ENCODE measurements at regions of chr22 and their contacts with region 1.

Region 1: GRCh38 chr22:50620593-50621355 is 7.2 kb downstream of the ARSA start:
- DNase-seq: peak; percentile 39 to 95 (median 64)
- ATAC-seq: peak; percentile 66
- H3K4me3 ChIP-seq: peak overlapping the region; percentile 53
- H3K4me3 Mint-ChIP-seq: peak overlapping the region; percentile 90
- H3K27ac ChIP-seq: peak overlapping the region; percentile 85 to 92
- H3K27ac Mint-ChIP-seq: peak overlapping the region; percentile 98
- H3K4me1 ChIP-seq: peaks cover 36% of the 10 kb centered on the region
- H3K4me1 Mint-ChIP-seq: peaks cover 35% of the 10 kb centered on the region
- H3K27me3 ChIP-seq: no peaks in the 10 kb centered on the region
- H3K27me3 Mint-ChIP-seq: no peaks in the 10 kb centered on the region
- CTCF ChIP-seq: peak; percentile 79

Region 2: DNA sequence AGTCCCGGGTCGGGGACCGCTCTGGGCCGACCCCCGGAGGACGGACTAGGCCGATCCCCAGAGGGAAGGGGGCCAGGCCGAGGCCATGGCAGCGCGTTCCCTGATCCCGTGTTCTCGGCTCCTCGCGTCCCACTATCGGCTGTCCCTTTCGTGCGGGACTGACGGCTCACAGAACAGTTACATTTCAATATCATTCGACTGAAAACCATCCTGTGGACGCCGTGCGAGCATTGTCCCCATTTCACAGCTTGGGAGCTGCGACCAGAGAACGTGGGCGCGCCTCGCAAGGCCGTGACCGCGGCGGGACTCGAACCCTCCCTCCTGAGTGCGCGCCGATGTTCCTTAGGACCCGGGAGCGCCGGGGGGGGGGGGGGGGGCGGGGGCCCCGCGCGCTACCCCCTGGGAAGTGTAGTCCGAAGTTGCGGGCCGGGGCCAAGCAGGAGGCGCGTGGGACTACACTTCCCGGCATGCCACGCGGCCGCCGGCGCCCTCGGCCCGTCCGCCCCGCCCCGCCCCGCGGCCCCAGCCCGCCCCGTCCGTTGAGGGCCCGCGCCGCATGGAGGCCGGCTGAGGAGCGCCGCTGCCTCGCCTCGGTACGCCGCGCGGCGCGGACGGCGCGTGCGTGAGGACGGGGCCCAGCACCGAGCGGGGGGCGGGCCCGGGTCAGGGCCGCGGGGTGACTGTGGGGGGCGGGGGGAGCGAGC is 435.2 kb before region 1 on chr22 and contains the start of gene TRABD:
- CTCF ChIA-PET with region 1: no interaction called
- POLR2A ChIA-PET with region 1: interaction called, 32 read pairs
- intact Hi-C with region 1: loop called in 1 of 2 experiments (anchors 1 kb)
- DNase-seq: peak; percentile 77 to 96 (median 88)
- ATAC-seq: peak; percentile 67
- H3K4me3 ChIP-seq: peak within 1 kb of the TSS; percentile 62
- H3K4me3 Mint-ChIP-seq: peak within 1 kb of the TSS; percentile 95
- H3K27ac ChIP-seq: peak within 1 kb of the TSS; percentile 56 to 60
- H3K27ac Mint-ChIP-seq: peak within 1 kb of the TSS; percentile 96
- H3K4me1 ChIP-seq: peaks cover 53% of the 10 kb centered on the region
- H3K4me1 Mint-ChIP-seq: peaks cover 25% of the 10 kb centered on the region
- H3K27me3 ChIP-seq: peaks cover 0 to 2% of the 10 kb centered on the region in 2 experiments
- H3K27me3 Mint-ChIP-seq: peaks cover 4% of the 10 kb centered on the region
- CTCF ChIP-seq: no peak
- total RNA-seq, gene TRABD: 184 to 193 TPM

Region 3: GRCh38 chr22:50200461-50201190 is 420.1 kb before region 1 on chr22 and contains the start of gene SELENOO:
- CTCF ChIA-PET with region 1: no interaction called
- POLR2A ChIA-PET with region 1: no interaction called
- intact Hi-C with region 1: no loop called
- DNase-seq: peak; percentile 76 to 96 (median 90)
- ATAC-seq: peak; percentile 80
- H3K4me3 ChIP-seq: peak within 1 kb of the TSS; percentile 60
- H3K4me3 Mint-ChIP-seq: peak within 1 kb of the TSS; percentile 91
- H3K27ac ChIP-seq: peak within 1 kb of the TSS in 1 of 2 donors; percentile 40
- H3K27ac Mint-ChIP-seq: peak within 1 kb of the TSS; percentile 85
- H3K4me1 ChIP-seq: peaks cover 27% of the 10 kb centered on the region
- H3K4me1 Mint-ChIP-seq: peaks cover 27% of the 10 kb centered on the region
- H3K27me3 ChIP-seq: no peaks in the 10 kb centered on the region
- H3K27me3 Mint-ChIP-seq: no peaks in the 10 kb centered on the region
- CTCF ChIP-seq: no peak
- total RNA-seq, gene SELENOO: 26.0 to 26.1 TPM

Region 4: DNA sequence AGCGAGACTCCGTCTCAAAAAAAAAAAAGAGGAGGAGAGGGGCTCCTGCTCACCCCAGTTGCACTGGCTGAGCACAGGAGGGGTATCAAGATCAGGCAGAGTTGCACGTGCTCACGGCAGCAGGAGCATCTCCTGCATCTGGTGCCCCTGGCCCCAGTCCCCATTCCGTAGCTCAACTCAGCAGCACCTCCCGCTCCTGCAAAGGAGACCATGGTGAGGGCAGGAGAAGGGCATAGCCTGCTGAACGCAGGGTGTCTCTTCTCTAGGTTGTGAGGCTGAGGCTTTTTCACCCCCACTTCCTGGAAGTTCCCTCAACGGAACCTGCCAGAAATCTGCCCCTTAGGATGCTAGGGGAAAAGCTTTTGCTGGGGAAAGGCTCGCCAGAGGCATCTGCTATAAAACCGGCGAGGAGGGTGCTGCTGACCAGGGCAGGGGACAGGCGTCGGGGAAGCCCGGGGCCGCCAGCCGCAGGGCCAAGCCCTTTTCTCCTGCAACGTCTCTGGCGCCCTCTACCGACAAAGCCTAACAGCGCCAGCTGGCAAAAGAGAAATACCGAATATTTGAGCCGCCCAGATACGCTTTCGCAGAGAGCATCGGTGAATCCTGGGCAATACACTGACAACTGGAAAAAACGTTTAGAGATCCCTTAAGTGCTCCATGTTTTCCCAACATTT is 278.7 kb before region 1 on chr22:
- CTCF ChIA-PET with region 1: interaction called, 5 read pairs
- POLR2A ChIA-PET with region 1: interaction called, 6 read pairs
- intact Hi-C with region 1: loop called in 1 of 2 experiments (anchors 5 kb)
- DNase-seq: peak; percentile 80 to 94 (median 87)
- ATAC-seq: peak; percentile 53
- H3K4me3 ChIP-seq: peak overlapping the region; percentile 62
- H3K4me3 Mint-ChIP-seq: peak overlapping the region; percentile 88
- H3K27ac ChIP-seq: peak overlapping the region; percentile 84 to 85
- H3K27ac Mint-ChIP-seq: peak overlapping the region; percentile 98
- H3K4me1 ChIP-seq: peaks cover 27% of the 10 kb centered on the region
- H3K4me1 Mint-ChIP-seq: peaks cover 7% of the 10 kb centered on the region
- H3K27me3 ChIP-seq: no peaks in the 10 kb centered on the region
- H3K27me3 Mint-ChIP-seq: no peaks in the 10 kb centered on the region
- CTCF ChIP-seq: peak; percentile 95

Region 5: DNA sequence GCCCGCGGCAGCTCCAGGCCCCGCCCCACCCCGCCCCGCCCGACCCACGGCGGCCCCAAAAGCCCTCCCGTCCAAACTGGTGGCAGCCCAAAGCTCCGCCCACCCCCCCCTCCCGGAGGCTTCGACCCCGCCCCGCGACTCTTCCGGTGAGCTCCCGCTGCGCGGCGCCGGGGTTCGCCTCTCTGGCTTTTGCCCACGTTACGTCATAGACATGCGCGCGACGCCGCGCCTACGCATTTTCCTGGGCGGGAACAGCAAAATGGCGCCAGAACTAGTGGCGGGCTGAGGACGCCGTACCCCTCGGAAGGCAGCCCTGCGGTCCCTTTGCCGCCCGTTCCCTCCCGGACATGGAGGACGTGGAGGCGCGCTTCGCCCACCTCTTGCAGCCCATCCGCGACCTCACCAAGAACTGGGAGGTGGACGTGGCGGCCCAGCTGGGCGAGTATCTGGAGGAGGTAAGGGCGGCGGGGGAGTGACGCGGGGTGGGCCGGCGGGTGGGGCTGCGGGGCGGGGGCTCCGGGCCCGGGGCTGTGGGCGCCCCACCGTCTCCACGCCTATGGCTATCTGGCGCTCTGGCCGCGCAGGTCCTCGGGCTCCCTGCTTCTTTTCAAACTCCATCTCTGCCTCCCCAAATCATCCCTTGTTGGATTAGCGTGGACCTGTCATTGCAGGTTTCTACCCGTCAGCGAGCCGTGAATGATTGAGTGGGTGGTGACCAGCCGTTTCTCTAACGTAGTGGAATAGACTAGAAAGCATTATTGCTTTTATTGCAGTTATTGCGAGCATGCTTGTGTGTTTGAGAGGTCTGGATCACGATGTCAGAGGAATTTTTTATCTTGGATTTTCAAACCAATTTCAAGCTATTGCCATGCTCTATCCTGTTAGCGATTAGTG is 112.5 kb before region 1 on chr22 and contains the start of gene NCAPH2:
- CTCF ChIA-PET with region 1: interaction called, 11 read pairs
- POLR2A ChIA-PET with region 1: interaction called, 47 read pairs
- intact Hi-C with region 1: loop called in 1 of 2 experiments (anchors 5 kb)
- DNase-seq: peak in 10 of 14 experiments; percentile 94 to 99 (median 97)
- ATAC-seq: peak; percentile 75
- H3K4me3 ChIP-seq: peak within 1 kb of the TSS; percentile 92
- H3K4me3 Mint-ChIP-seq: peak within 1 kb of the TSS; percentile 94
- H3K27ac ChIP-seq: peak within 1 kb of the TSS; percentile 89 to 92
- H3K27ac Mint-ChIP-seq: peak within 1 kb of the TSS; percentile 95
- H3K4me1 ChIP-seq: peaks cover 38% of the 10 kb centered on the region
- H3K4me1 Mint-ChIP-seq: peaks cover 21% of the 10 kb centered on the region
- H3K27me3 ChIP-seq: no peaks in the 10 kb centered on the region
- H3K27me3 Mint-ChIP-seq: no peaks in the 10 kb centered on the region
- CTCF ChIP-seq: no peak
- total RNA-seq, gene NCAPH2: 184 to 185 TPM

Region 6: DNA sequence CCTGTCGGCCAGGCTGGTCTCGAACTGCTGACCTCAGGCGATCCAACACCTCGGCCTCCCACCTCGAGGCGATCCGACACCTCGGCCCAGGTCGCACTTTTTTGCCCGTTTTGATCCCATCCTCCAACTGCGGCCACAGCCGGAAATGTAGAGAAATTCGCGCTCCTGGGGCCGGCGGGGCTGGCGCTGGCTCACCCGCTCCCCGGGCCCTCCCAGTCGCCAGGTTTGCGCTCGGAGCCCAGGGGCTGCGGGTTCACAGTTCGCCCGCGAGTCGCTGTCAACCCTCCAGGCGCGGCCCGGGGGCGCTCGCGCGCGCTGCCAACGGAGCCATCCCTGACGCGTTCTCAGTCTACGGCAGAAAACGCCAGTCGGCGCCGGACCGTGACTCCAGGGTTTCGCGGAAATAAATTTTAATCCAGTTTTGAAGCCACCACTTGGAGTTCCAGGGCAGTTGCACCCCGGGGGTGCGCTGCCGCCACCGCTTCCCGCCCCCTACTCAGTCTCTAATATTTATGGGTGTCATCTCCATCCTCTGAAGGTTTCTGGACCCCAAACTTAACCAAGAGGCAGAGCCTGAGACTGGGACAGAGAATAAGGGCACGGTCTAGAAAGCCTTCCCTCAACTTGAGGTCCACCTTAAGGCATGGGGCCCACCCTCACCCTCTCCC is 76.6 kb before region 1 on chr22:
- CTCF ChIA-PET with region 1: interaction called, 16 read pairs
- POLR2A ChIA-PET with region 1: interaction called, 35 read pairs
- intact Hi-C with region 1: loop called in 1 of 2 experiments (anchors 2 kb)
- DNase-seq: peak; percentile 62 to 91 (median 80)
- ATAC-seq: peak; percentile 48
- H3K4me3 ChIP-seq: peak overlapping the region; percentile 41
- H3K4me3 Mint-ChIP-seq: peak overlapping the region; percentile 74
- H3K27ac ChIP-seq: peak overlapping the region; percentile 27 to 44
- H3K27ac Mint-ChIP-seq: peak overlapping the region; percentile 83
- H3K4me1 ChIP-seq: peaks cover 63% of the 10 kb centered on the region
- H3K4me1 Mint-ChIP-seq: peaks cover 45% of the 10 kb centered on the region
- H3K27me3 ChIP-seq: no peaks in the 10 kb centered on the region
- H3K27me3 Mint-ChIP-seq: no peaks in the 10 kb centered on the region
- CTCF ChIP-seq: peak; percentile 67

Region 7: DNA sequence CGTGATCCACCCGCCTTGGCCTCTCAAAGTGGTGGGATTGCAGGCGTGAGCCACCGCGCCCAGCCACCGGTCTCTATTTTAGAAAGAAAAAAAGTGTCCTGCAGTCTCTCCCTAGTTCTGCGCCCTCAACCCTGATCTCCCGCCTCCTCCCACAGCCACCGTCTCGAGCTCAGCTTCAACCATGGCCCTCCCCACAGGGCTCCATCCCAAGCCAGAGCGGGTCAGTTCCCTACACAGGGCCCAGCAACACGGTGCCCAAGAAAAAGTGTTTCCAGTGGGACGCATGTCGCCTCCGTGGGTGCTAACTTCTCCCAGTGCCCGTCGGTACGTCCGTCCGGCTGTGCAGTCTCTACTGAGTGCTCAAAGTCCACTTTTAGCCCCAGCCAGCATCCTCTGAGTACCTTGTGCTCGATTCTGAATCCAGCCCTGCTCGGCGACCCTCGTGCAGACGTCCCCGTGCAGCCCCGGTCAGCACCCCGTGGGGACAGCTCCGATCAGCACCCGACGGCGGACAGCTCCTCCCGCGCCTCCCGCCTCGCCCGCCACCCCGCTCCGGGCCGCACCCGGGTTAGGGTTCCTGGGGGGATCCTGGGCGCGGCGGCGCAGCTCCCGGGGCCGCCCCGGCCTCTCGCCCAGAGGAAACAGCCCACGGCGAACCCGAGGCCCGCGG is 20.9 kb before region 1 on chr22:
- CTCF ChIA-PET with region 1: interaction called, 3 read pairs
- POLR2A ChIA-PET with region 1: interaction called, 7 read pairs
- intact Hi-C with region 1: loop called in 1 of 2 experiments (anchors 1 kb)
- DNase-seq: peak; percentile 42 to 79 (median 62)
- ATAC-seq: peak; percentile 99
- H3K4me3 ChIP-seq: no peak overlapping the region
- H3K4me3 Mint-ChIP-seq: no peak overlapping the region
- H3K27ac ChIP-seq: no peak overlapping the region
- H3K27ac Mint-ChIP-seq: no peak overlapping the region
- H3K4me1 ChIP-seq: peaks cover 7% of the 10 kb centered on the region
- H3K4me1 Mint-ChIP-seq: peaks cover 15% of the 10 kb centered on the region
- H3K27me3 ChIP-seq: peaks cover 42 to 52% of the 10 kb centered on the region in 2 experiments
- H3K27me3 Mint-ChIP-seq: peaks cover 39% of the 10 kb centered on the region
- CTCF ChIP-seq: no peak

Measured in CD4-positive, alpha-beta T cell (primary cell).